ENCODE measurements at regions of chr14 and their contacts with region 1.

Region 1: GRCh38 chr14:60248697-60249318 is at the start of gene PPM1A:
- DNase-seq: peak; percentile 94
- ATAC-seq: peak; percentile 67
- H3K4me3 Mint-ChIP-seq: peak within 1 kb of the TSS; percentile 95
- H3K27ac Mint-ChIP-seq: peak within 1 kb of the TSS; percentile 100
- H3K4me1 Mint-ChIP-seq: peaks cover 64% of the 10 kb centered on the region
- H3K27me3 Mint-ChIP-seq: no peaks in the 10 kb centered on the region
- CTCF ChIP-seq: no peak
- total RNA-seq, gene PPM1A: 38.2 to 52.5 TPM (median 41.2 TPM) in 3 replicates

Region 2: GRCh38 chr14:60204104-60204842 is 44.5 kb before region 1 on chr14:
- CTCF ChIA-PET with region 1: no interaction called
- POLR2A ChIA-PET with region 1: interaction called, 13 read pairs
- DNase-seq: no peak
- ATAC-seq: peak; percentile 62
- H3K4me3 Mint-ChIP-seq: peak overlapping the region; percentile 33
- H3K27ac Mint-ChIP-seq: peak overlapping the region; percentile 62
- H3K4me1 Mint-ChIP-seq: peaks cover 24% of the 10 kb centered on the region
- H3K27me3 Mint-ChIP-seq: no peaks in the 10 kb centered on the region; the same call in none of the 2 replicates
- CTCF ChIP-seq: no peak

Region 3: GRCh38 chr14:60276342-60276741 is 27.5 kb after region 1 on chr14:
- CTCF ChIA-PET with region 1: no interaction called
- POLR2A ChIA-PET with region 1: interaction called, 11 read pairs
- DNase-seq: no peak
- ATAC-seq: no peak
- H3K4me3 Mint-ChIP-seq: no peak overlapping the region
- H3K27ac Mint-ChIP-seq: peak overlapping the region; percentile 48
- H3K4me1 Mint-ChIP-seq: peaks cover 88% of the 10 kb centered on the region
- H3K27me3 Mint-ChIP-seq: no peaks in the 10 kb centered on the region
- CTCF ChIP-seq: no peak

Measured in WTC11 (cell line).